ENCODE measurements at regions of chr11 and their contacts with region 1.

Region 1: GRCh38 chr11:3905080-3905953 is 49.9 kb downstream of the STIM1 start:
- DNase-seq: no peak
- ATAC-seq: peak; percentile 90
- H3K4me3 ChIP-seq: no peak overlapping the region
- H3K27ac ChIP-seq: peak overlapping the region; percentile 77
- H3K4me1 ChIP-seq: peaks cover 43% of the 10 kb centered on the region
- H3K27me3 ChIP-seq: no peaks in the 10 kb centered on the region
- CTCF ChIP-seq: no peak

Region 2: GRCh38 chr11:3849297-3849874 is 55.9 kb before region 1 on chr11:
- CTCF ChIA-PET with region 1: no interaction called
- POLR2A ChIA-PET with region 1: no interaction called
- in situ Hi-C with region 1: no loop called
- intact Hi-C with region 1: no loop called
- DNase-seq: no peak
- ATAC-seq: peak; percentile 84
- H3K4me3 ChIP-seq: no peak overlapping the region
- H3K27ac ChIP-seq: no peak overlapping the region
- H3K4me1 ChIP-seq: peaks cover 3% of the 10 kb centered on the region
- H3K27me3 ChIP-seq: no peaks in the 10 kb centered on the region; the same call in 1 of the 2 replicates
- CTCF ChIP-seq: peak; percentile 92

Region 3: GRCh38 chr11:3962406-3962840 is 57.1 kb after region 1 on chr11:
- CTCF ChIA-PET with region 1: no interaction called
- POLR2A ChIA-PET with region 1: no interaction called
- in situ Hi-C with region 1: loop called (anchors 10 kb)
- intact Hi-C with region 1: no loop called
- DNase-seq: no peak
- ATAC-seq: no peak
- H3K4me3 ChIP-seq: no peak overlapping the region
- H3K27ac ChIP-seq: no peak overlapping the region
- H3K4me1 ChIP-seq: no peaks in the 10 kb centered on the region
- H3K27me3 ChIP-seq: no peaks in the 10 kb centered on the region
- CTCF ChIP-seq: no peak